ENCODE measurements at regions of chr16 and their contacts with region 1.

Region 1: GRCh38 chr16:4550591-4550990 is 5.5 kb upstream of the C16orf96 start:
- DNase-seq: no peak
- H3K4me3 ChIP-seq: no peak overlapping the region
- H3K27ac ChIP-seq: no peak overlapping the region
- H3K4me1 ChIP-seq: no peaks in the 10 kb centered on the region
- H3K27me3 ChIP-seq: peaks cover 0 to 2% of the 10 kb centered on the region in 2 experiments
- CTCF ChIP-seq: no peak
- POLR2A ChIP-seq: no peak

Region 2: DNA sequence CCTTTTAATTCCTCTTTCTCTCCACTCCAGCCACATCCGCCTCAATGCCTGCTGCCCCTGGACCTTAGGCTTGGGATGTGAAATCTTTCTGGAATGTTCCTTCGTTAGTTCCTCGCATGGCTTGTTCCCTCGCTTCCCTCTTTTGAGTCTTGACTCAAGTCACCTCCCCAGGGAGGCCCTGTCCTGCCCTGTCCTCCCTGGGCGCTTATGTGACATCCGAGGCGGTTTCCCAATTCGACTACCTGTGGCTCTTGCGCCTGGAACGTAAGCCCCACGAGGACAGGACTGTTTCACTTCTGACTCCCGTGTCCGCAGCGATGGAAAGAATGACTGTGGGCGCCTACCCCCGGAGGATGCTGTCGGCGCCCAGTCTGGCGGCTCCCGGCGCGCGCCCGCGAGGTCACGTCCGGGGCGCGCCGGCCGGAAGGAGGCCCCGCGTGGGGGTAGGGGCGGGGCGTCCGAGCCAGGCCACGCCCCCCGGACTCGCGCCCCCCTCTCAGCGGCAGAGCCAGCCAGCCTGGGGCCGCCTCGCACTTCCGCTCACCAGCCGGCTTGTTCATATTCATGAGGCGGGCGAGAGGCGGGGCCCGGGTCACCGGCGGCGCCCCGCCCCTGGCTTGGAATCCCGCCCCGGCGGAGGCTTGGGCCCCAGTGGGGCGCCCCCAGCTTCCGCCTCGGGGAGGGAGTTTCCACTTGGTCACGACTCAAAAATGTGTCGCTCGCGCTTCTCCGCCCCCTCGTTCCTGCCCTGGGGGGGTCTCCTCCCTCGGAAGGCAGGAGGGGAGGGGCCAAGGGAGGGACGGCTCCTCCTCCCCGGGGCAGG is 243.2 kb before region 1 on chr16:
- CTCF ChIA-PET with region 1: no interaction called
- POLR2A ChIA-PET with region 1: no interaction called
- dilution Hi-C with region 1: no loop called
- intact Hi-C with region 1: no loop called
- DNase-seq: peak; percentile 88
- H3K4me3 ChIP-seq: peak overlapping the region in 2 of 3 experiments; percentile 25 to 33
- H3K27ac ChIP-seq: peak overlapping the region; percentile 76
- H3K4me1 ChIP-seq: peaks cover 7% of the 10 kb centered on the region
- H3K27me3 ChIP-seq: no peaks in the 10 kb centered on the region
- CTCF ChIP-seq: no peak
- POLR2A ChIP-seq: no peak

Region 3: DNA sequence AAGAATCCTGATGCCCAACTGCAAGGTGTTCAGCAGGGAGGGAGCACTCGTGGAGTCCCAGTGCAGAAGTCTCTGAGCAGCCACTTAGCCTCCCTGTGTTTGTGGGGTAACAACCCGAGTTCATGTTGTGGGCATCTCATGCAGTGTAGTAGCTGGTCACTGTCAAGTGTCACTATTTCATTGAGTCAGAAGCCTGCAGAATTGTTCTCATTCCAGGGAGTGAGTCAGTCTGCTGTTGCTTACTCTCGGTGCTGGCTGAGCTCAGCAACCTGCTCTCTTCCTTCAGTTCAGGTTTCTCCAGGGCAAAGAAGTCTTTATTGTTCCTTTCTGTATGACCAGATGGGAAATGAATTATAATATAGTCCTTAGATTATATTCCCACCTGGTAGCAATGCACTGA is 50.3 kb before region 1 on chr16:
- CTCF ChIA-PET with region 1: interaction called, 109 read pairs
- POLR2A ChIA-PET with region 1: no interaction called
- dilution Hi-C with region 1: no loop called
- intact Hi-C with region 1: no loop called
- DNase-seq: peak; percentile 83
- H3K4me3 ChIP-seq: peak overlapping the region in 1 of 3 experiments; percentile 31
- H3K27ac ChIP-seq: peak overlapping the region; percentile 76
- H3K4me1 ChIP-seq: peaks cover 27% of the 10 kb centered on the region
- H3K27me3 ChIP-seq: no peaks in the 10 kb centered on the region
- CTCF ChIP-seq: no peak
- POLR2A ChIP-seq: no peak

Region 4: GRCh38 chr16:4511441-4512082 is 39.0 kb before region 1 on chr16:
- CTCF ChIA-PET with region 1: interaction called, 109 read pairs
- POLR2A ChIA-PET with region 1: no interaction called
- dilution Hi-C with region 1: no loop called
- intact Hi-C with region 1: loop called (anchors 1 kb)
- DNase-seq: peak; percentile 61
- H3K4me3 ChIP-seq: no peak overlapping the region
- H3K27ac ChIP-seq: no peak overlapping the region
- H3K4me1 ChIP-seq: peaks cover 22% of the 10 kb centered on the region
- H3K27me3 ChIP-seq: no peaks in the 10 kb centered on the region
- CTCF ChIP-seq: peak; percentile 50 to 72
- POLR2A ChIP-seq: no peak

Region 5: GRCh38 chr16:4529085-4530060 is 21.2 kb before region 1 on chr16:
- CTCF ChIA-PET with region 1: interaction called, 12 read pairs
- POLR2A ChIA-PET with region 1: no interaction called
- dilution Hi-C with region 1: no loop called
- intact Hi-C with region 1: no loop called
- DNase-seq: peak; percentile 47
- H3K4me3 ChIP-seq: no peak overlapping the region
- H3K27ac ChIP-seq: no peak overlapping the region
- H3K4me1 ChIP-seq: peaks cover 2% of the 10 kb centered on the region
- H3K27me3 ChIP-seq: no peaks in the 10 kb centered on the region
- CTCF ChIP-seq: no peak
- POLR2A ChIP-seq: no peak

Region 6: GRCh38 chr16:4561596-4561995 is 11.0 kb after region 1 on chr16:
- CTCF ChIA-PET with region 1: interaction called, 25 read pairs
- POLR2A ChIA-PET with region 1: no interaction called
- dilution Hi-C with region 1: no loop called
- intact Hi-C with region 1: no loop called
- DNase-seq: no peak
- H3K4me3 ChIP-seq: no peak overlapping the region
- H3K27ac ChIP-seq: no peak overlapping the region
- H3K4me1 ChIP-seq: no peaks in the 10 kb centered on the region
- H3K27me3 ChIP-seq: peaks cover 0 to 7% of the 10 kb centered on the region in 2 experiments
- CTCF ChIP-seq: no peak
- POLR2A ChIP-seq: no peak